ENCODE measurements at regions of chr1 and their contacts with region 1.

Region 1: DNA sequence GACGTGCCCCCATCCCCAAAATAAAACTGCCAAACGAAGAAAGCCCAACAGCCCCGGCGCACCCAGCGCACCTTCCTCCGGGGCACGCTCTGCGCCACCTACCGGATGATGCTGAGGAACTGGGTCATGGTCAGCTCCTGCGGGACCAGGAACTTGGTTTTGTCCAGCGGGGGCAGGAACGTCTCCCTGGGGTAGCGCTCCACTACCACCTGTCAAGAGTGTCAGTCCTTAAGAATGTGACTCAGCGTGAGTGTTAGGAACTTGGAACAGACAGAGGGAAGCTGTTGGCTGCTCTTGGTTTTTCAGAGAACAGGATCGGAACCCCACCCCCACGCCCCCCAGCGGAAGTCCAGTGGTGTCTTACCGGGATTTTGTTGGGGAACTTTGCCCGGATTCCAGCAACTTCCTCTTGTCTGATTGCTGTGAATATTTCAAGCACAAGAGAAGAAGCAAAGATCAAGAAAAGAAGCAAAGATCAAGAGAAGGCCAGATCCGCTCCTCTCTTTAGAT is 431 bp downstream of the MAP1LC3C start:
- DNase-seq: peak; percentile 68
- H3K4me3 Mint-ChIP-seq: peak overlapping the region; percentile 54
- H3K27ac Mint-ChIP-seq: no peak overlapping the region
- H3K4me1 Mint-ChIP-seq: peaks cover 3% of the 10 kb centered on the region
- H3K27me3 Mint-ChIP-seq: peaks cover 1% of the 10 kb centered on the region

Region 2: DNA sequence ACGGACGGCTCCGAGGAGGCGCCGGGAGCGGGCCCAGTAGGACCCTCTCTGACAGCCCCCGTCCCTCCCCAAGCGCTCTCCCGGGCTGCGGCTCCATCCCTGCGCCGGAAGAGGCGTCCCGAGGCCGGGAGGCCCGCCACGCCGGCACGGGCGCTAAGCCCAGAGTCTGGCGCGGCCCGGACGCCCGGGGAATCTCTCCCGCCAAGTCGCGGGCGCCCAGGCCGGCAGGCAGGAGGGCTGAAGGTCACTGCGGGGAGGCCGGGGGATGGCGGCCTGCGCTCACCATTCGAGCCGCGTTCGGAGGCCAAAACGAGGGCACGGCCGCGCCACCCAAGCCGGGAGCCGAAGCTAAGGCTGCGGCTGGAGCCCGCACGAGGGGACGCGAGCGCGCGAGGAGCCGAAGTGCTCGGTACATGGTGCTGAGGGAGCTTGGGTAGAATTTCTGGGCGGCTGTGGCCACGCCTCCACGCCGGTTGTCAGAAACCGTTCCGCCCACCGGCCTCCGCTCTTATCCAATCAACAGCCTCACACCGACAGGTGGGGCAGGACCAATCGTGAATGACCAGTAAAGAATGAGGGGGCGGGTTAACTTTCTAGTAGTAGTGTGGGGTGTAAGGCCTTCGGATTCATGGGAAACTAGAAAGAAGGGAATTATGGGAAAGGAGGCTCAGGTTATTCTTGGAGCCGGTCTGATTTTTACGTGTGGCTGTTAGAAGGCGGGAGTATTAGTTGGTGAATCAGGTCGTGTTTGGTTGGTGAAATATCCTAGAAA is 479.0 kb before region 1 on chr1 and contains the start of gene FH:
- CTCF ChIA-PET with region 1: no interaction called
- intact Hi-C with region 1: loop called (anchors 5 kb)
- DNase-seq: peak; percentile 97
- H3K4me3 Mint-ChIP-seq: peak within 1 kb of the TSS; percentile 89
- H3K27ac Mint-ChIP-seq: peak within 1 kb of the TSS; percentile 77
- H3K4me1 Mint-ChIP-seq: peaks cover 11% of the 10 kb centered on the region
- H3K27me3 Mint-ChIP-seq: peaks cover 11% of the 10 kb centered on the region
- total RNA-seq, gene FH: 91.6 to 95.4 TPM

Region 3: GRCh38 chr1:241627453-241628259 is 370.8 kb before region 1 on chr1:
- CTCF ChIA-PET with region 1: no interaction called
- intact Hi-C with region 1: loop called (anchors 1 kb)
- DNase-seq: peak; percentile 69
- H3K4me3 Mint-ChIP-seq: peak overlapping the region; percentile 49
- H3K27ac Mint-ChIP-seq: peak overlapping the region; percentile 79
- H3K4me1 Mint-ChIP-seq: peaks cover 31% of the 10 kb centered on the region
- H3K27me3 Mint-ChIP-seq: no peaks in the 10 kb centered on the region

Region 4: DNA sequence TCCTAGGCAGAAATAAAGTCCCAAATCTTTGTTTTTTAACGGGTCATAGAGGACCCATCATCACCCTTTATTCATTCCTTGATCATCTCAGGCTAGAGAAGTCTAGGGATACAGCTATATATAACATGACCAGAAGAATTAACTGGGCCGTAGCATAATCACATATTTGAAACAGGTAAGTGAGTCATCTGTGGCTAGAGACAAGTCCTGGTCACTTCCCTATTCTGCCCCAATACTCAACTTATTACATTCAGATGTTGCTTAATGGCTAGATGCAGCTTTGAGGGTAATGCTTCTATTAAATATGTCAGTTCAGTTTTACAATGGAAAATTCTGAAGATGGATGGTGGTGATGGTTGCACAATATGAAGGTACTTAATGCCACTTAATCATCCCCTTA is 103.5 kb before region 1 on chr1:
- CTCF ChIA-PET with region 1: interaction called, 18 read pairs
- intact Hi-C with region 1: loop called (anchors 1 kb)
- DNase-seq: no peak
- H3K4me3 Mint-ChIP-seq: no peak overlapping the region
- H3K27ac Mint-ChIP-seq: no peak overlapping the region
- H3K4me1 Mint-ChIP-seq: no peaks in the 10 kb centered on the region
- H3K27me3 Mint-ChIP-seq: no peaks in the 10 kb centered on the region

Region 5: GRCh38 chr1:241944300-241944699 is 54.2 kb before region 1 on chr1:
- CTCF ChIA-PET with region 1: no interaction called
- intact Hi-C with region 1: no loop called
- DNase-seq: no peak
- H3K4me3 Mint-ChIP-seq: no peak overlapping the region
- H3K27ac Mint-ChIP-seq: no peak overlapping the region
- H3K4me1 Mint-ChIP-seq: no peaks in the 10 kb centered on the region
- H3K27me3 Mint-ChIP-seq: peaks cover 3% of the 10 kb centered on the region

Region 6: DNA sequence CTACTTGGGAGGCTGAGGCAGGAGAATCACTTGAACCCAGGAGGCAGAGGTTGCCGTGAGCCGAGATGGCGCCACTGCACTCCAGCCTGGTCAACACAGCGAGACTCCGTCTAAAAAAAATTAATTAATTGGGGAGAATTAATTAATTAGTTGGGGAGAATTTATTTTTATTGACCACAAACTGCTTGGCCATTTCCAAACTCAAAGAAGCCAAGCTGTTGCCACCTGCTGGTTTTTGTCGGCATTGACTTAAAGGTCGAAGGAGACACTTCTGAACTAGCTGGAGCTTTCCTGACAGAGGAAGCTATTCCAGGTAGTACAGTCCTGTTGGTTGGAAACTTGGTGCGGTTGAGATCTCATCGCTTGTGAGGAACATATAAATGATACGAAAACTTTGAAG is 12.7 kb before region 1 on chr1:
- CTCF ChIA-PET with region 1: interaction called, 17 read pairs
- intact Hi-C with region 1: no loop called
- DNase-seq: peak; percentile 43
- H3K4me3 Mint-ChIP-seq: no peak overlapping the region
- H3K27ac Mint-ChIP-seq: no peak overlapping the region
- H3K4me1 Mint-ChIP-seq: no peaks in the 10 kb centered on the region
- H3K27me3 Mint-ChIP-seq: no peaks in the 10 kb centered on the region

Measured in activated naive CD4-positive, alpha-beta T cell treated with anti-CD3 and anti-CD28 coated beads for 36 hours (primary cell).